Activated CD4-positive, alpha-beta memory T cell treated with anti-CD3 and anti-CD28 coated beads for 36 hours (primary cell): ENCODE measurements at regions of chr17 and their contacts with region 1.

Region 1: DNA sequence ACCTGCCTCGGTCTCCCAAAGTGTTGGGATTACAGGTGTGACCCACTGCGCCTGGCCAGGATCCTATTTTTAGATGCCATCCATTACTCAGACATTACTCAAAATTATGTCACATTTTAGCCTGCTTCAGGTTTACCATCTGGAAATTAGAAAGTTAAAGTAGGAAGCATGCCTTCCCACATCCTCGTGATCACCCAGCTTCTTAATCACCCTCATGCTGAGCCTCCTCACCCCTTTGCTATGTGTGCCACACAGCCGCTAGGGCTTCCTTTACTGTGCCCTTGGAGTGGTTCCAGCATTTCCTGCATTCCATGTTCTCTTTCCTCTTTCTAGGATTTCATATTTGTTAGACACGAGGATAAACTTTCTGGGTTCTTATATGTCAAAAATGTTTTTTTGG is 9.3 kb downstream of the ADORA2B start:
- DNase-seq: no peak
- H3K4me3 Mint-ChIP-seq: no peak overlapping the region
- H3K27ac Mint-ChIP-seq: no peak overlapping the region
- H3K4me1 Mint-ChIP-seq: peaks cover 23% of the 10 kb centered on the region
- H3K27me3 Mint-ChIP-seq: peaks cover 30% of the 10 kb centered on the region

Region 2: GRCh38 chr17:15892731-15893657 is 61.2 kb before region 1 on chr17:
- CTCF ChIA-PET with region 1: no interaction called
- POLR2A ChIA-PET with region 1: no interaction called
- intact Hi-C with region 1: loop called (anchors 10 kb)
- DNase-seq: no peak
- H3K4me3 Mint-ChIP-seq: no peak overlapping the region
- H3K27ac Mint-ChIP-seq: no peak overlapping the region
- H3K4me1 Mint-ChIP-seq: peaks cover 11% of the 10 kb centered on the region
- H3K27me3 Mint-ChIP-seq: no peaks in the 10 kb centered on the region

Region 3: GRCh38 chr17:15981208-15981607 is 27.0 kb after region 1 on chr17:
- CTCF ChIA-PET with region 1: no interaction called
- POLR2A ChIA-PET with region 1: no interaction called
- intact Hi-C with region 1: loop called (anchors 1 kb)
- DNase-seq: peak; percentile 47
- H3K4me3 Mint-ChIP-seq: no peak overlapping the region
- H3K27ac Mint-ChIP-seq: no peak overlapping the region
- H3K4me1 Mint-ChIP-seq: peaks cover 19% of the 10 kb centered on the region
- H3K27me3 Mint-ChIP-seq: no peaks in the 10 kb centered on the region

Region 4: GRCh38 chr17:15999439-16000350 is 45.5 kb after region 1 on chr17 and contains the starts of genes TTC19 and ZSWIM7:
- CTCF ChIA-PET with region 1: no interaction called
- POLR2A ChIA-PET with region 1: interaction called, 3 read pairs
- intact Hi-C with region 1: loop called (anchors 1 kb)
- DNase-seq: peak; percentile 97
- H3K4me3 Mint-ChIP-seq: peak within 1 kb of the TSS; percentile 96
- H3K27ac Mint-ChIP-seq: peak within 1 kb of the TSS; percentile 89
- H3K4me1 Mint-ChIP-seq: peaks cover 31% of the 10 kb centered on the region
- H3K27me3 Mint-ChIP-seq: no peaks in the 10 kb centered on the region
- total RNA-seq, gene TTC19: 21.0 to 22.6 TPM
- total RNA-seq, gene ZSWIM7: 11.2 to 12.0 TPM

Region 5: GRCh38 chr17:16027708-16028584 is 73.7 kb after region 1 on chr17:
- CTCF ChIA-PET with region 1: no interaction called
- POLR2A ChIA-PET with region 1: no interaction called
- intact Hi-C with region 1: loop called (anchors 1 kb)
- DNase-seq: peak; percentile 81
- H3K4me3 Mint-ChIP-seq: peak overlapping the region; percentile 64
- H3K27ac Mint-ChIP-seq: peak overlapping the region; percentile 97
- H3K4me1 Mint-ChIP-seq: peaks cover 48% of the 10 kb centered on the region
- H3K27me3 Mint-ChIP-seq: no peaks in the 10 kb centered on the region